OCI-LY7 (cell line): ENCODE measurements at regions of chr2 and their contacts with region 1.

Region 1: GRCh38 chr2:9142551-9143263 is 63.9 kb upstream of the ASAP2 start:
- DNase-seq: peak; percentile 65
- H3K4me3 ChIP-seq: peak overlapping the region; percentile 8
- H3K27ac ChIP-seq: no peak overlapping the region
- H3K4me1 ChIP-seq: peaks cover 5% of the 10 kb centered on the region
- CTCF ChIP-seq: peak; percentile 94

Region 2: GRCh38 chr2:8644605-8645175 is 498.0 kb before region 1 on chr2:
- CTCF ChIA-PET with region 1: no interaction called
- POLR2A ChIA-PET with region 1: no interaction called
- intact Hi-C with region 1: no loop called
- DNase-seq: no peak
- H3K4me3 ChIP-seq: no peak overlapping the region
- H3K27ac ChIP-seq: no peak overlapping the region
- H3K4me1 ChIP-seq: no peaks in the 10 kb centered on the region
- CTCF ChIP-seq: peak; percentile 32; the same call in 1 of the 2 replicates

Region 3: GRCh38 chr2:8872821-8873432 is 269.8 kb before region 1 on chr2:
- CTCF ChIA-PET with region 1: no interaction called
- POLR2A ChIA-PET with region 1: no interaction called
- intact Hi-C with region 1: loop called (anchors 5 kb)
- DNase-seq: peak; percentile 55
- H3K4me3 ChIP-seq: no peak overlapping the region
- H3K27ac ChIP-seq: no peak overlapping the region
- H3K4me1 ChIP-seq: peaks cover 11% of the 10 kb centered on the region
- CTCF ChIP-seq: peak; percentile 92

Region 4: DNA sequence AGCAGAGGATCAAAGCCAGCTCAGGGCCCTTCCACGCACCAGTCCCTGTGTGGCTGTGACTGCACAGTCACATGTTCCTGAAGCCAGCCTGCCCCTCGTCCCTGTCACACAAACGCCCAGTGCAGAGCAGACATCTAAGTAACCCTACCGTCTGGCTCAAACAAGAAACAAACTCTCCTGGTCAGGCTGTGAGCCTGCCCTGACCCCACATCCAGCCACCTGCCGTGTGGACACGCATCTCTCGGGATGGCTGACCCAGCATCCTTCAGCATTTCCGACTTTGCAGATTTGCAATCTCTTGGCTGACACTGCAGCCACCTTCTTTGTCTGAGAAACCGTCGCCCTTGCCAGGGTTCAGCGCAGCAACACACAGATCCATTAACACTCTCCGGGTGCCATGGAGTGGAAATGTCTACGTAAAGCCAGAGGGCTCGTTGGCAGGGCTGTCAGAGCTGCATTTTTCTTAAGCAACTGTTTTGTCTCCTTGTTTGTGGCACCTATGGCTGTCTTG is 18.4 kb before region 1 on chr2:
- CTCF ChIA-PET with region 1: interaction called, 10 read pairs
- POLR2A ChIA-PET with region 1: no interaction called
- intact Hi-C with region 1: no loop called
- DNase-seq: no peak
- H3K4me3 ChIP-seq: no peak overlapping the region
- H3K27ac ChIP-seq: no peak overlapping the region
- H3K4me1 ChIP-seq: no peaks in the 10 kb centered on the region
- CTCF ChIP-seq: no peak

Region 5: DNA sequence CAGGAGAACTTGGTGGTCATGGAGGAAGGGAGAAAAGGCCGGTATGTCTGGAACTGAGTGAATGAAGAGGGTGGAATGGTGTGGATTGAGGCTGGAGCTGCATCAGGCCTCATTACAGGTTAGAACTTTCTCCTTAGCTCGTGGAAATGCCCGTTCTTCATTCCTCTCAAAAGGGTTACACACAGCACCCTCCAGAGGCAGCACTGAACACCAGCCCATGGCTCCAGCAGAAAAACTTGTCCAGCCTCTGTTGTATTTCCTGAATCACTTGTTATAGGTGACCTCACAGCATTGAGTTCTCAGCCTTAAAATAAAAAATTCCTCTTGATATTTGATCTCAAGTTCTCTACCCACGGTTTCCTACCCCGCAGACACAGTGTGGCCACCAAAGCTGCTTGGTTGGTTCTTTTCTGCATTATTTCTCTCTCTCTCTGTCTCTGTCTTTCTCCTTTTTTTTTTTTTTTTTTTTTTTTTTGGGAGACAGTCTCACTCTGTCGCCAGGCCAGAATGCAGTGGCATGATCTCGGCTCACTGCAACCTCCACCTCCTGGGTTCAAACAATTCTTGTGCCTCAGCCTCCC is 191.0 kb after region 1 on chr2:
- CTCF ChIA-PET with region 1: interaction called, 3 read pairs
- POLR2A ChIA-PET with region 1: no interaction called
- intact Hi-C with region 1: loop called (anchors 1 kb)
- DNase-seq: peak; percentile 51
- H3K4me3 ChIP-seq: no peak overlapping the region
- H3K27ac ChIP-seq: no peak overlapping the region
- H3K4me1 ChIP-seq: peaks cover 14% of the 10 kb centered on the region
- CTCF ChIP-seq: peak; percentile 74

Region 6: GRCh38 chr2:9373077-9373875 is 230.6 kb after region 1 on chr2:
- CTCF ChIA-PET with region 1: interaction called, 4 read pairs
- POLR2A ChIA-PET with region 1: no interaction called
- intact Hi-C with region 1: loop called (anchors 1 kb)
- DNase-seq: peak; percentile 90
- H3K4me3 ChIP-seq: no peak overlapping the region
- H3K27ac ChIP-seq: peak overlapping the region; percentile 34
- H3K4me1 ChIP-seq: peaks cover 46% of the 10 kb centered on the region
- CTCF ChIP-seq: no peak

Region 7: DNA sequence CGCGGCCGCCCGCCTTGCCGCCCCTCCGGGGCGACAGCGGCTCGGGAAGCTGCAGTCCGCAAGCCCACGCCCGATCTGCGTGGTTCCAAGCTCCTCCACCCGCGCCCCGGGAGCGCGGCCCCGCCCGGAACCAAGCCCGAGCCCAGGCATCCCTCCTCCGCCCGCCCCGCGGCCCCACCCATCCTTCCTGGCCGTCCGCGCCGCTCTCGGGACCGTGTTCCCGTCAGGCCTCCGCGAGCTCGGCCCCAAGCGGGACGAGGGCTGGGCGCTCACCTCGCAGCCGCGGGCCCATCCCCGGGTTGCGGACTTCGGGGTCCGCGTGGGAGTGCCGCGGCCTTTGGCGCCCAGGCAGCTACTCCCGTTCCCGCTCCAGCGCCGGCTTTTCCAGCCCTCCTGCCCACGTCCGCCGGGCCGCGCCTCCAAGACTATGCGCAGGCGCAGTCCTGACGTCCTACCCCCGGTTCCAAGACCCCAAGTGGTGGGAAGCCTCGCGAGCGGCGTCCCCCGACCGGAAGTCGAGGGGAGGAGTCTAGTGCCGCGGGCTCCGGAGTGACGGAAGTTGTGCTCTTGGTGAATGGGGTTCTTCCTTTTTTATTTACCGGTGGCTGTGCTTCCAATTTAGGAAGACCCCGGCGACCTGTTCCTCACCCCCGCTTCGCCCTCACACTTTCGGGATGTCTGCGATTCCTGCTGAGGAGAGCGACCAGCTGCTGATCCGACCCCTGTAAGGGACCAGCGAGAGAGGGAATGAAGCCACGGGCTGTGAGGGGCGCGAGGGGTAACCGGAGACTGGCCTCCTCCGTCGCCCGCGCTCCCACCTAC is 280.6 kb after region 1 on chr2 and contains the starts of genes CPSF3 and ITGB1BP1:
- CTCF ChIA-PET with region 1: no interaction called
- POLR2A ChIA-PET with region 1: interaction called, 3 read pairs
- intact Hi-C with region 1: loop called (anchors 5 kb)
- DNase-seq: peak; percentile 99
- H3K4me3 ChIP-seq: peak within 1 kb of the TSS; percentile 76
- H3K27ac ChIP-seq: peak within 1 kb of the TSS; percentile 74
- H3K4me1 ChIP-seq: peaks cover 25% of the 10 kb centered on the region
- CTCF ChIP-seq: no peak
- total RNA-seq, gene CPSF3: 52.0 and 54.5 TPM in 2 replicates
- total RNA-seq, gene ITGB1BP1: 51.9 and 54.0 TPM in 2 replicates